ENCODE measurements at regions of chr3 and their contacts with region 1.

Region 1: GRCh38 chr3:172750368-172751174 is at the start of gene ECT2:
- DNase-seq: peak; percentile 99
- H3K4me3 ChIP-seq: peak within 1 kb of the TSS; percentile 63 to 99 (median 83)
- H3K4me3 Mint-ChIP-seq: peak within 1 kb of the TSS; percentile 98 to 99
- H3K27ac ChIP-seq: peak within 1 kb of the TSS; percentile 48 to 85
- H3K27ac Mint-ChIP-seq: peak within 1 kb of the TSS; percentile 85 to 98 (median 95)
- H3K4me1 ChIP-seq: peaks cover 13 to 24% of the 10 kb centered on the region in 2 donors
- H3K4me1 Mint-ChIP-seq: peaks cover 25% of the 10 kb centered on the region
- H3K27me3 ChIP-seq: no peaks in the 10 kb centered on the region
- H3K27me3 Mint-ChIP-seq: peaks cover 0 to 1% (median 0%) of the 10 kb centered on the region in 3 donors
- CTCF ChIP-seq: peak; percentile 79
- polyA plus RNA-seq, gene ECT2: 2.6 to 3.3 (median 2.7) TPM

Region 2: GRCh38 chr3:172710664-172711453 is 39.7 kb before region 1 on chr3 and contains the start of gene NCEH1:
- intact Hi-C with region 1: loop called in 1 of 2 experiments (anchors 5 kb)
- DNase-seq: peak; percentile 93 to 99 (median 97)
- H3K4me3 ChIP-seq: peak within 1 kb of the TSS; percentile 89 to 90 (median 90)
- H3K4me3 Mint-ChIP-seq: peak within 1 kb of the TSS; percentile 97 to 98
- H3K27ac ChIP-seq: peak within 1 kb of the TSS; percentile 94 to 95
- H3K27ac Mint-ChIP-seq: peak within 1 kb of the TSS; percentile 95 to 98 (median 97)
- H3K4me1 ChIP-seq: peaks cover 37 to 44% of the 10 kb centered on the region in 2 donors
- H3K4me1 Mint-ChIP-seq: peaks cover 39% of the 10 kb centered on the region
- H3K27me3 ChIP-seq: no peaks in the 10 kb centered on the region
- H3K27me3 Mint-ChIP-seq: no peaks in the 10 kb centered on the region
- CTCF ChIP-seq: peak; percentile 94
- polyA plus RNA-seq, gene NCEH1: 8.6 to 23.9 (median 20.7) TPM

Region 3: DNA sequence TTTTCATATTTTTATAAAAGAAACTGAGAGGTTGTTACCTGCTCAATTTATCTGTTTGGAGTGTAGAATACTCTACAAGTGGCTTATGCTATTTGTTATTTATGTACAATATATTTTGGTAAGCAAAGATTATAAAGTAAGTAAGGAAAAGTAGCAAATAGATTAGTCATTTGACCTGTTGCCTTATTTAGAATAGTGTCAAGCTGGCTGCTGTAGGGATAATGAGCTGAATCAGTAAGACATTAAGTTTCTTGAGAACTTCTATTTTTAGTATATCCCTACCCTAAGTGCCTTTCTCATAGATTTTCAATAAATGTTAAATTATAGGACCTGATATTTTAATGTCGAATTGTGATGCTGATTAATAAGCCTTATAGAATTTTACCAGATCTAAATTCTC is 37.2 kb after region 1 on chr3:
- intact Hi-C with region 1: no loop called
- DNase-seq: no peak
- H3K4me3 ChIP-seq: no peak overlapping the region
- H3K4me3 Mint-ChIP-seq: no peak overlapping the region
- H3K27ac ChIP-seq: no peak overlapping the region
- H3K27ac Mint-ChIP-seq: no peak overlapping the region
- H3K4me1 ChIP-seq: no peaks in the 10 kb centered on the region
- H3K4me1 Mint-ChIP-seq: no peaks in the 10 kb centered on the region
- H3K27me3 ChIP-seq: no peaks in the 10 kb centered on the region
- H3K27me3 Mint-ChIP-seq: no peaks in the 10 kb centered on the region
- CTCF ChIP-seq: no peak

Measured in CD14-positive monocyte (primary cell).